ENCODE measurements at regions of chr14 and their contacts with region 1.

Region 1: GRCh38 chr14:92783816-92784431 is 10.2 kb upstream of the GOLGA5 start:
- DNase-seq: no peak
- H3K4me3 ChIP-seq: no peak overlapping the region
- H3K27ac ChIP-seq: no peak overlapping the region
- H3K4me1 ChIP-seq: peaks cover 20% of the 10 kb centered on the region
- H3K27me3 ChIP-seq: no peaks in the 10 kb centered on the region
- CTCF ChIP-seq: peak; percentile 71

Region 2: GRCh38 chr14:92719890-92720323 is 64.0 kb before region 1 on chr14:
- intact Hi-C with region 1: loop called (anchors 2 kb)
- DNase-seq: no peak
- H3K4me3 ChIP-seq: no peak overlapping the region
- H3K27ac ChIP-seq: peak overlapping the region; percentile 61
- H3K4me1 ChIP-seq: peaks cover 33% of the 10 kb centered on the region
- H3K27me3 ChIP-seq: no peaks in the 10 kb centered on the region
- CTCF ChIP-seq: no peak

Region 3: GRCh38 chr14:93103392-93104080 is 319.6 kb after region 1 on chr14:
- intact Hi-C with region 1: no loop called
- DNase-seq: no peak
- H3K4me3 ChIP-seq: no peak overlapping the region
- H3K27ac ChIP-seq: no peak overlapping the region
- H3K4me1 ChIP-seq: peaks cover 89% of the 10 kb centered on the region
- H3K27me3 ChIP-seq: no peaks in the 10 kb centered on the region
- CTCF ChIP-seq: no peak

Measured in left ventricle myocardium inferior (tissue), 1 donor.